Endothelial cell of umbilical vein (primary cell): ENCODE measurements at regions of chr4 and their contacts with region 1.

Region 1: GRCh38 chr4:168569066-168569970 is 72.5 kb downstream of the PALLD start:
- DNase-seq: peak; percentile 98
- H3K4me3 ChIP-seq: peak overlapping the region in 2 of 3 experiments; percentile 11 to 30
- H3K27ac ChIP-seq: peak overlapping the region; percentile 39
- H3K4me1 ChIP-seq: peaks cover 26% of the 10 kb centered on the region
- H3K27me3 ChIP-seq: no peaks in the 10 kb centered on the region
- CTCF ChIP-seq: no peak
- POLR2A ChIP-seq: no peak

Region 2: GRCh38 chr4:168183717-168184608 is 385.4 kb before region 1 on chr4:
- CTCF ChIA-PET with region 1: no interaction called
- POLR2A ChIA-PET with region 1: no interaction called
- dilution Hi-C with region 1: no loop called
- intact Hi-C with region 1: no loop called
- DNase-seq: peak; percentile 65
- H3K4me3 ChIP-seq: no peak overlapping the region
- H3K27ac ChIP-seq: no peak overlapping the region
- H3K4me1 ChIP-seq: peaks cover 3% of the 10 kb centered on the region
- H3K27me3 ChIP-seq: no peaks in the 10 kb centered on the region
- CTCF ChIP-seq: peak; percentile 18 to 22
- POLR2A ChIP-seq: no peak

Region 3: GRCh38 chr4:168264903-168265302 is 304.4 kb before region 1 on chr4:
- CTCF ChIA-PET with region 1: no interaction called
- POLR2A ChIA-PET with region 1: no interaction called
- dilution Hi-C with region 1: no loop called
- intact Hi-C with region 1: no loop called
- DNase-seq: no peak
- H3K4me3 ChIP-seq: no peak overlapping the region
- H3K27ac ChIP-seq: no peak overlapping the region
- H3K4me1 ChIP-seq: no peaks in the 10 kb centered on the region
- H3K27me3 ChIP-seq: no peaks in the 10 kb centered on the region
- CTCF ChIP-seq: no peak
- POLR2A ChIP-seq: no peak

Region 4: GRCh38 chr4:168558599-168558998 is 10.7 kb before region 1 on chr4:
- CTCF ChIA-PET with region 1: no interaction called
- POLR2A ChIA-PET with region 1: no interaction called
- dilution Hi-C with region 1: no loop called
- intact Hi-C with region 1: loop called (anchors 1 kb)
- DNase-seq: peak; percentile 95
- H3K4me3 ChIP-seq: no peak overlapping the region
- H3K27ac ChIP-seq: peak overlapping the region; percentile 69
- H3K4me1 ChIP-seq: peaks cover 47% of the 10 kb centered on the region
- H3K27me3 ChIP-seq: no peaks in the 10 kb centered on the region
- CTCF ChIP-seq: no peak
- POLR2A ChIP-seq: no peak